ENCODE measurements at regions of chr11 and their contacts with region 1.

Region 1: GRCh38 chr11:19561011-19561410 is 151.6 kb upstream of the NAV2 start:
- DNase-seq: no peak
- H3K4me3 ChIP-seq: no peak overlapping the region
- H3K27ac ChIP-seq: no peak overlapping the region
- H3K4me1 ChIP-seq: no peaks in the 10 kb centered on the region
- H3K27me3 ChIP-seq: no peaks in the 10 kb centered on the region
- CTCF ChIP-seq: no peak
- EP300 ChIP-seq: no peak
- POLR2A ChIP-seq: no peak

Region 2: DNA sequence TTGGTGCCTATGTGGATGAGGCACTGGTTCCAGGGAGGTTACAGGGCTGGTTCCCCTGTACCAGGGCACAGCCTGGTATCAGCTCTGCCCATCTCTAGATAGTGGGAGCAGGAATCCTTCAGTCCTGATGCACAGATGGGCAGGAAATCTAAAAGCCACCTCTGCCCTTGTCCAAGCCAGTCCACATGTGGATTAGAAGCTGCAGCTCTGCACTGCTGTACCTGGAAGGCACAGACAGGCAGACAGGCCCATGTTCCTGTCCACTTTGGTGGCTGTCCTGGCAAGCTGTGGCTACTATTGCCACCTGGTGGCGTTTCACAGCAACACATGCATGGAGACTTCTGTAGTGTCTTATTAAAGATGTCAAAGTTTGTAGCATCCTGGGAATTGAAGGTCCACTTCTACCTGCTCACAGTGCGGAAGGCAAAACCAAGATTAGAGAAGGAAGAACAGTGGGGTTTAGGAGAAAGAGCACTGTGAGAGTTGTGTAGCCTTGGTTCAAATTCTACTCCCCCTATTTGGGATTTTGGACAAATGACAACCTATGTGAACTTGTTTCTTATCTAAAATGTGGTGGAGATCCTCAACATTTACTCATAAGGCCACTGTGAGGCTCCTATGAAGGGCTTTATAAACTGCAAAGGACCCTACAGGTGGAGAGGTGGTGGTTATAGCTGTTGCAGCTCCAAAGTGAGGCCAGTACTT is 181.7 kb after region 1 on chr11:
- intact Hi-C with region 1: loop called (anchors 1 to 5 kb)
- DNase-seq: peak; percentile 53 to 82 (median 73)
- H3K4me3 ChIP-seq: no peak overlapping the region
- H3K27ac ChIP-seq: no peak overlapping the region
- H3K4me1 ChIP-seq: peaks cover 1% of the 10 kb centered on the region
- H3K27me3 ChIP-seq: no peaks in the 10 kb centered on the region
- CTCF ChIP-seq: peak; percentile 55 to 84 (median 64)
- EP300 ChIP-seq: no peak
- POLR2A ChIP-seq: no peak

Region 3: GRCh38 chr11:20355221-20356219 is 794.5 kb after region 1 on chr11:
- intact Hi-C with region 1: loop called in 1 of 4 experiments (anchors 10 kb)
- DNase-seq: no peak
- H3K4me3 ChIP-seq: no peak overlapping the region
- H3K27ac ChIP-seq: no peak overlapping the region
- H3K4me1 ChIP-seq: no peaks in the 10 kb centered on the region
- H3K27me3 ChIP-seq: no peaks in the 10 kb centered on the region
- CTCF ChIP-seq: peak in 2 of 3 donors; percentile 9 to 15
- EP300 ChIP-seq: no peak
- POLR2A ChIP-seq: no peak